Aorta (tissue), 5 donors: ENCODE measurements at regions of chr17 and their contacts with region 1.

Region 1: GRCh38 chr17:4143563-4144421 is 795 bp downstream of the CYB5D2 start:
- DNase-seq: peak; percentile 95 to 97
- ATAC-seq: peak; percentile 98
- H3K4me3 ChIP-seq: peak overlapping the region; percentile 22 to 71
- H3K27ac ChIP-seq: peak overlapping the region; percentile 82 to 89
- H3K4me1 ChIP-seq: no peaks in the 10 kb centered on the region
- H3K27me3 ChIP-seq: no peaks in the 10 kb centered on the region

Region 2: GRCh38 chr17:4043862-4044261 is 99.9 kb before region 1 on chr17:
- intact Hi-C with region 1: no loop called
- DNase-seq: no peak
- ATAC-seq: no peak
- H3K4me3 ChIP-seq: no peak overlapping the region
- H3K27ac ChIP-seq: no peak overlapping the region
- H3K4me1 ChIP-seq: no peaks in the 10 kb centered on the region
- H3K27me3 ChIP-seq: no peaks in the 10 kb centered on the region

Region 3: DNA sequence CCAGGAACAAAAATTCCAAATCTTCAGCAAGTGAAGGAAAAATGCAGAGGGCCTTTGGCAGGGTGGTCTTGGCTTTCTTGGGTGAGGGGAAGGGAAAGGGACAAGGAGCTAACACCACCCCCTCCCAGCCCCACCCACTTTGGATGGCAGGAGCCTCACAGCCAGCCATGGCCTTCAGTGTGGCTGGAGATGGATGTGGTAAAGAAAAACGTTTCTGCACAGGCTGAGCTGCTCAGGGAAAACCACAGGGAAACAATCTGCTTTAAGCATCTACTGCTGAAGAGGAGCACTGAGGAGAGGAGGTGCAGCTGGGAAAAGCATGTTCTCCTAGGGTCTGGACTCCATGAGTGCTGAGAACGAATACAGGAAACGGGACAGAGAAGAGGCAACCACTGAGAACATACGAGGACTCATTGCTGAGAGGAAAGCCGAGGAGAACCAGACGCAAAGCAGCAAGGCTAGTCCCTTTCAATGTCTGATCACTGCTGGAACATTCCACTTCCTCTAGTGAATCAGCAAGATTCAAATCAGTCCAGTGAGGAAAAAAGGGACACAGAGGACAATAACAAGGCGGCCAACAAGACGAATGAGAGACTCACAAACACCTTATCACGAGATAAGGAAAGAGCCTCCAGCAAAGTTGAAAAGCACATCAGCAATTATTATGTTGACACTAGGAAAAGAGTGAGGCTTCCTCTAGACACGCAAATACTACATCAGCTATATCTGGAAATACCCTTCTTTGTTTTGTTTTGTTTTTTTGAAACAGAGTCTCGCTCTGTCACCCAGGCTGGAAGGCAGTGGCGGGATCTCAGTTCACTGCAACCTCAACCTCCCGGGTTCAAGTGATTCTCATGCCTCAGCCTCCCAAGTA is 42.7 kb before region 1 on chr17:
- intact Hi-C with region 1: no loop called
- DNase-seq: no peak
- ATAC-seq: no peak
- H3K4me3 ChIP-seq: no peak overlapping the region
- H3K27ac ChIP-seq: peak overlapping the region in 1 of 2 donors; percentile 74
- H3K4me1 ChIP-seq: no peaks in the 10 kb centered on the region
- H3K27me3 ChIP-seq: no peaks in the 10 kb centered on the region

Region 4: GRCh38 chr17:4187076-4187475 is 43.3 kb after region 1 on chr17:
- intact Hi-C with region 1: loop called (anchors 5 to 10 kb)
- DNase-seq: peak in 1 of 2 donors; percentile 15
- ATAC-seq: no peak
- H3K4me3 ChIP-seq: no peak overlapping the region
- H3K27ac ChIP-seq: no peak overlapping the region
- H3K4me1 ChIP-seq: no peaks in the 10 kb centered on the region
- H3K27me3 ChIP-seq: no peaks in the 10 kb centered on the region

Region 5: GRCh38 chr17:4199818-4200402 is 56.1 kb after region 1 on chr17:
- intact Hi-C with region 1: loop called in 1 of 2 experiments (anchors 10 kb)
- DNase-seq: no peak
- ATAC-seq: no peak
- H3K4me3 ChIP-seq: no peak overlapping the region
- H3K27ac ChIP-seq: no peak overlapping the region
- H3K4me1 ChIP-seq: peaks cover 0 to 9% of the 10 kb centered on the region in 2 donors
- H3K27me3 ChIP-seq: no peaks in the 10 kb centered on the region